ENCODE measurements at regions of chrX and their contacts with region 1.

Region 1: GRCh38 chrX:11881485-11882170 is 123.6 kb downstream of the MSL3 start:
- DNase-seq: no peak
- H3K4me3 ChIP-seq: no peak overlapping the region
- H3K27ac ChIP-seq: no peak overlapping the region
- H3K4me1 ChIP-seq: 0 out of 2 replicates have a peak, but pooled peaks cover under 1% of the 10 kb centered on the region
- H3K27me3 ChIP-seq: no peaks in the 10 kb centered on the region
- CTCF ChIP-seq: no peak

Region 2: DNA sequence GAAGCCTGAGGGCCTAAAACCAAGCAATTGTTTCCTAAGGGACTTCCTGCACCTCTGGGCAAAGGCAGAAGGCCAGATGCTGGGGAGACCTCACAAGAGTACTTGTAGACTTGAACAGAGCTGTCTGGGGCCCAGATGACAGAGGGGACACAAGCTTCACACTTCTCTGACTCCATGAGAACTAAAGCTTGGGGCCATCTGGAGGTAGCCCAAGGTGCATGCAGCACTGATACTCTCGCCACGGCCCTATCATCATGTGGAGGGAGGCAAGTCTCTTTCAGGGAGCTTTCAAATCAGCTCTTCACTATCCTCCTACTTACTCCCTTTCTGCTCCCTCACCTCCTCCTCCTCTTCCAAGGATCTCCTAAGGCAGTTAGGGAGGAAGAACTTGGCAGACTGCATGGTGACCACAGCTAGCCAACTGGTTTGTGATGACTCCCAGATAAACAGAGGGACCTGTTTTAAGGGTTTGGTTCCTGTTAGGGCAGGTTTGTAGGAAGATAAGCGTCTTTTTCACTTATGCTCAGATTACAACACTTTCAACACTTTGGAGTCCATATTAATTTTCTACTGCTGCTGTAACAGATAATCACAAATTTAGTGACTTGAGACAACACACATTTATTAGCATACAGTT is 99.8 kb before region 1 on chrX:
- CTCF ChIA-PET with region 1: interaction called, 11 read pairs
- POLR2A ChIA-PET with region 1: no interaction called
- intact Hi-C with region 1: no loop called
- DNase-seq: peak in 1 of 2 experiments; percentile 40
- H3K4me3 ChIP-seq: no peak overlapping the region
- H3K27ac ChIP-seq: no peak overlapping the region
- H3K4me1 ChIP-seq: no peaks in the 10 kb centered on the region
- H3K27me3 ChIP-seq: no peaks in the 10 kb centered on the region
- CTCF ChIP-seq: no peak

Region 3: DNA sequence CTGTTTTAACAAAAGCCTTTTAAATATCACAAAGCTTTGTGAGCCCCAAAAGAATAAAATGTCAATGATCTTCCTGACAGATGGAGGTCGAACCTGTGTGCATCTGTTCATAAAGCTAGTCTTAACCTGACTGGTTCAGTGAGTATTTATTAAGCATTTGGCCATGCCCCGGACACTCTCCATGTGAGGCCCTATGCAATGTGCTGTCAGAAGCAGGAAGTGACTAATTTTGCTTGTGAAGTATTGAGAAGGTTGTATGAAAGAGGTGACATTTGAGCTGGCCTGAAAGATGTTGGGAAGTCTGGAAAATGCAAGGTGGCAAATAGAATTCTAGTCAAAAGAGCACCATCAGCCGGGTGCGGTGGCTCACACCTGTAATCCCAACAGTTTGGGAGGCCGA is 47.8 kb after region 1 on chrX:
- CTCF ChIA-PET with region 1: no interaction called
- POLR2A ChIA-PET with region 1: interaction called, 17 read pairs
- intact Hi-C with region 1: no loop called
- DNase-seq: no peak
- H3K4me3 ChIP-seq: no peak overlapping the region
- H3K27ac ChIP-seq: no peak overlapping the region
- H3K4me1 ChIP-seq: no peaks in the 10 kb centered on the region
- H3K27me3 ChIP-seq: no peaks in the 10 kb centered on the region
- CTCF ChIP-seq: no peak

Region 4: GRCh38 chrX:12052109-12052508 is 170.5 kb after region 1 on chrX:
- CTCF ChIA-PET with region 1: no interaction called
- POLR2A ChIA-PET with region 1: no interaction called
- intact Hi-C with region 1: no loop called
- DNase-seq: no peak
- H3K4me3 ChIP-seq: no peak overlapping the region
- H3K27ac ChIP-seq: no peak overlapping the region
- H3K4me1 ChIP-seq: no peaks in the 10 kb centered on the region
- H3K27me3 ChIP-seq: no peaks in the 10 kb centered on the region
- CTCF ChIP-seq: no peak

Region 5: GRCh38 chrX:12139934-12140611 is 258.4 kb after region 1 on chrX:
- CTCF ChIA-PET with region 1: no interaction called
- POLR2A ChIA-PET with region 1: no interaction called
- intact Hi-C with region 1: no loop called
- DNase-seq: no peak
- H3K4me3 ChIP-seq: no peak overlapping the region
- H3K27ac ChIP-seq: no peak overlapping the region
- H3K4me1 ChIP-seq: no peaks in the 10 kb centered on the region
- H3K27me3 ChIP-seq: no peaks in the 10 kb centered on the region; the same call in 1 of the 2 replicates
- CTCF ChIP-seq: no peak

Measured in PC-9 (cell line).